Psoas muscle (tissue), 8 donors: ENCODE measurements at regions of chr20 and their contacts with region 1.

Region 1: GRCh38 chr20:33443512-33444239 is at the start of gene SNTA1:
- DNase-seq: peak; percentile 94 to 98
- ATAC-seq: peak; percentile 90 to 95 (median 92)
- H3K4me3 ChIP-seq: peak within 1 kb of the TSS; percentile 71
- H3K27ac ChIP-seq: peak within 1 kb of the TSS; percentile 90
- H3K4me1 ChIP-seq: peaks cover 26% of the 10 kb centered on the region
- H3K27me3 ChIP-seq: no peaks in the 10 kb centered on the region
- CTCF ChIP-seq: no peak
- total RNA-seq, gene SNTA1: 102 to 150 (median 129) TPM

Region 2: GRCh38 chr20:33401184-33401920 is 42.3 kb before region 1 on chr20 and contains the start of gene CDK5RAP1:
- intact Hi-C with region 1: loop called (anchors 5 kb)
- DNase-seq: peak; percentile 85 to 91
- ATAC-seq: peak; percentile 95 to 96 (median 95)
- H3K4me3 ChIP-seq: peak within 1 kb of the TSS; percentile 96
- H3K27ac ChIP-seq: peak within 1 kb of the TSS; percentile 83
- H3K4me1 ChIP-seq: peaks cover 12% of the 10 kb centered on the region
- H3K27me3 ChIP-seq: no peaks in the 10 kb centered on the region
- CTCF ChIP-seq: no peak
- total RNA-seq, gene CDK5RAP1: 14.7 to 28.4 (median 22.8) TPM

Region 3: DNA sequence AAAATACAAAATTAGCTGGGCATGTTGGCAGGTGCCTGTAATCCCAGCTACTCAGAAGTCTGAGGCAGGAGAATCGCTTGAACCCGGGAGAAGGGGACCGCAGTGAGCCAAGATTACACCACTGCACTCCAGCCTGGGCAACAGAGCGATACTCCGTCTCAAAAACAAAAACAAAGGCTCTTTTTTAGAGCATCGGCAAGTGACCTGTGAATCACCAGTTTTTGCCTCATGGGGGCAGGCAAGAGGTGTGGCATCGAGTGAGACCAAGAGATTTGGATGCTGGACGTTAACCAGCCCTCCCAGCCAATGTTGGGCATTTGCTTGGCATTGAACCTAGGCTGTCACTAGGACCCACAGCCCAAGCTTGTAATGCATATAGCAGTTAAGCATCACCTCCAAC is 27.7 kb before region 1 on chr20:
- intact Hi-C with region 1: loop called (anchors 2 to 5 kb)
- DNase-seq: peak; percentile 40 to 74
- ATAC-seq: peak; percentile 41 to 65 (median 50)
- H3K4me3 ChIP-seq: no peak overlapping the region
- H3K27ac ChIP-seq: peak overlapping the region; percentile 98
- H3K4me1 ChIP-seq: peaks cover 31% of the 10 kb centered on the region
- H3K27me3 ChIP-seq: no peaks in the 10 kb centered on the region
- CTCF ChIP-seq: peak; percentile 65

Region 4: DNA sequence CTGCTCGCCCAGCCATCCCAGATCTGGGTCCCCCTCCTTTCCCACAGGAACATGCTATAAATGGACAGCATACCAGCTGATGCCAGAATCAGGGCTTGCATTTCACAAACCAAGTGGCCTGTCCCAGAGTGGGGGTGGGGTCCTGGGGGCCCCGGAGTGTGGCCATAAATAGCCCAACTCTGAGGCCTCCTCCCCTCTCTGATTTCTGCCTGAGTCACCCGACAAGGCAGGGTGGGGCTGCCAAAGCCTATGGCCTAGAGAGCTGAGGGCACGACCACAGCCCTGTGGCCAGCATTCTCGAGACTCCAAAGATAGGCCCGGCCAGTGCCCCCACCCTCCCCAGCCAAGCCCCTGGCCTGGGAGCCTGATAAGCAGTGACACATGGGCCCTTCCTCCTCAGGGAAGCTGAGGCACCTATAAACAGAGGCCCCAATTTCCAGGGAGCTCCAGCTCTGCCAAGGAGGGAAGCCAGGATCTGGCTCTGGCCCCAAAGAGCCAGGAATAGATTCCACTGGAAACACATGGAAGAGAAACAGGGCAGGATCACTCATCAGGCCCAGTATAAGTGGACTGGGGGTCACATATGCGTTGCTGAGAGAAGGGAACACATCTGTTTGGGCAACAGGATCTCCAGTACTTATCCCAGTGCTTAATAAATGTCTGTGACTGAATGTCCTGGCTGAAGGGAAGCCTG is 20.4 kb before region 1 on chr20:
- intact Hi-C with region 1: loop called in 1 of 2 experiments (anchors 1 kb)
- DNase-seq: peak; percentile 86 to 95
- ATAC-seq: peak; percentile 84 to 92 (median 88)
- H3K4me3 ChIP-seq: no peak overlapping the region
- H3K27ac ChIP-seq: peak overlapping the region; percentile 98
- H3K4me1 ChIP-seq: peaks cover 73% of the 10 kb centered on the region
- H3K27me3 ChIP-seq: no peaks in the 10 kb centered on the region
- CTCF ChIP-seq: no peak